Activated CD4-positive, alpha-beta T cell treated with anti-CD3 and anti-CD28 coated beads for 36 hours (primary cell): ENCODE measurements at regions of chr1 and their contacts with region 1.

Region 1: GRCh38 chr1:111699268-111699667 is 39.9 kb downstream of the INKA2 start:
- DNase-seq: no peak
- ATAC-seq: no peak
- H3K4me3 Mint-ChIP-seq: no peak overlapping the region
- H3K27ac Mint-ChIP-seq: peak overlapping the region; percentile 48
- H3K4me1 Mint-ChIP-seq: peaks cover 52% of the 10 kb centered on the region
- H3K27me3 Mint-ChIP-seq: no peaks in the 10 kb centered on the region

Region 2: GRCh38 chr1:111290630-111291029 is 408.6 kb before region 1 on chr1 and contains the start of gene CHIA:
- CTCF ChIA-PET with region 1: no interaction called
- POLR2A ChIA-PET with region 1: no interaction called
- intact Hi-C with region 1: no loop called
- DNase-seq: no peak
- ATAC-seq: no peak
- H3K4me3 Mint-ChIP-seq: no peak within 1 kb of the TSS
- H3K27ac Mint-ChIP-seq: no peak within 1 kb of the TSS
- H3K4me1 Mint-ChIP-seq: peaks cover 11% of the 10 kb centered on the region
- H3K27me3 Mint-ChIP-seq: no peaks in the 10 kb centered on the region
- total RNA-seq, gene CHIA: not detected

Region 3: DNA sequence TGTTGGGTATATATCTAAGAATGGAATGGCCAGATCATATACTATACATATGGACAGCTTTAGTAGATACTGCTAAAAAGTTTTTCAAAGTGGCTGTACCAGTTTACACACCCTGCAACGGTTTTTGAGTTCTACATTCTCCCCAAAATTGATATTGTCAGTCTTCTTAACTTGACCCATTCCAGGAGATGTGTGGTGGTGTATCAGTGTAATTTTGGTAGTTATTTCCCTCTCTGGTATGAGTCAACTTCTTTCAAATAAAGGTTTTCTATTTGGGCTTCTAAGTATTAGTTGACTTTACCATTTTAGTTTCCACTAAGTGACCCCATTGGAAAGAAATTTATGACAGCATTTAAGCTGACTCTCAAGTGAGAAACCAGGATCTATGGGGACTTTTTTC is 10.7 kb after region 1 on chr1:
- CTCF ChIA-PET with region 1: interaction called, 51 read pairs
- POLR2A ChIA-PET with region 1: interaction called, 3 read pairs
- intact Hi-C with region 1: no loop called
- DNase-seq: no peak
- ATAC-seq: peak; percentile 39
- H3K4me3 Mint-ChIP-seq: no peak overlapping the region
- H3K27ac Mint-ChIP-seq: peak overlapping the region; percentile 52
- H3K4me1 Mint-ChIP-seq: peaks cover 27% of the 10 kb centered on the region
- H3K27me3 Mint-ChIP-seq: no peaks in the 10 kb centered on the region